Endothelial cell of umbilical vein (primary cell): ENCODE measurements at regions of chr3 and their contacts with region 1.

Region 1: DNA sequence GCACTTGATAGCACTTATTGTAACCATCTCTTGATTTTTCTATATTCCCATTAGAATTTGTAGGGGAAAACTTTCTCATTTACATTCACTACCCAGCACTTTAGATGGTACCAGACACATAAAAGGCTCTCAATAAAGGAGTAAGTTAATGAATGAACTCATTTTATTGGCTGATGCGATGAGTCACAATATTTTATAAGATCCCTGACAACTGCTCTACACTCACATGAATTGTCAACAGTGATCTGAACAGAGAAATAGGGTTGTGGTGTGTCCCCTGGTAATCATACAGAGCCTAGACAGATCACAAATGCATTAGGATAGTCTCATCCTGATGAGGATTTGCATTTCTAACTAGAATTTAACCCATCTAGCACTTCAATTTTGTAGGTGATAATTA is 567.6 kb upstream of the ARPP21 start:
- DNase-seq: no peak
- H3K4me3 ChIP-seq: no peak overlapping the region
- H3K27ac ChIP-seq: no peak overlapping the region
- H3K4me1 ChIP-seq: no peaks in the 10 kb centered on the region
- H3K27me3 ChIP-seq: no peaks in the 10 kb centered on the region
- CTCF ChIP-seq: no peak
- POLR2A ChIP-seq: no peak

Region 2: DNA sequence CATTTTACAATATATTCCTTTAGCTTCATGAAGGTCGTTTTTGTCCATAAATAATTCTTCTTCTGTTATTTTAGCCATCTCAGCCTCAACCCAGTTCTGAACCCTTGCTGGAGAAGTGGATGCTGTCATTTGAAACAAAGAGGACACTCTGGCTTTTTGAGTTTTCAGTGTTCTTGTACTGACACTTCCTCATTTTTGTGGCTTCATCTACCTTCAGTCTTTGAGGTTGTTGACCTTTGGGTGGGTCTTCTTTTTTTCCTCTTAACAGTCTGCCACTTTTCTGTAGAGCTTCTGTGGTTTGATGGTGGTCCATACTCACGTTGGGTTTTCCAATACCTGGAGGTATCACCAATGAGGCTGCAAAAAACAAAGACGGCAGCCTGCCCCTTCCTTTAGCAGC is 622.5 kb before region 1 on chr3:
- CTCF ChIA-PET with region 1: no interaction called
- POLR2A ChIA-PET with region 1: no interaction called
- dilution Hi-C with region 1: no loop called
- intact Hi-C with region 1: loop called (anchors 5 kb)
- DNase-seq: no peak
- H3K4me3 ChIP-seq: no peak overlapping the region
- H3K27ac ChIP-seq: no peak overlapping the region
- H3K4me1 ChIP-seq: no peaks in the 10 kb centered on the region
- H3K27me3 ChIP-seq: no peaks in the 10 kb centered on the region
- CTCF ChIP-seq: no peak
- POLR2A ChIP-seq: no peak